CD4-positive, alpha-beta memory T cell (primary cell): ENCODE measurements at regions of chr19 and their contacts with region 1.

Region 1: DNA sequence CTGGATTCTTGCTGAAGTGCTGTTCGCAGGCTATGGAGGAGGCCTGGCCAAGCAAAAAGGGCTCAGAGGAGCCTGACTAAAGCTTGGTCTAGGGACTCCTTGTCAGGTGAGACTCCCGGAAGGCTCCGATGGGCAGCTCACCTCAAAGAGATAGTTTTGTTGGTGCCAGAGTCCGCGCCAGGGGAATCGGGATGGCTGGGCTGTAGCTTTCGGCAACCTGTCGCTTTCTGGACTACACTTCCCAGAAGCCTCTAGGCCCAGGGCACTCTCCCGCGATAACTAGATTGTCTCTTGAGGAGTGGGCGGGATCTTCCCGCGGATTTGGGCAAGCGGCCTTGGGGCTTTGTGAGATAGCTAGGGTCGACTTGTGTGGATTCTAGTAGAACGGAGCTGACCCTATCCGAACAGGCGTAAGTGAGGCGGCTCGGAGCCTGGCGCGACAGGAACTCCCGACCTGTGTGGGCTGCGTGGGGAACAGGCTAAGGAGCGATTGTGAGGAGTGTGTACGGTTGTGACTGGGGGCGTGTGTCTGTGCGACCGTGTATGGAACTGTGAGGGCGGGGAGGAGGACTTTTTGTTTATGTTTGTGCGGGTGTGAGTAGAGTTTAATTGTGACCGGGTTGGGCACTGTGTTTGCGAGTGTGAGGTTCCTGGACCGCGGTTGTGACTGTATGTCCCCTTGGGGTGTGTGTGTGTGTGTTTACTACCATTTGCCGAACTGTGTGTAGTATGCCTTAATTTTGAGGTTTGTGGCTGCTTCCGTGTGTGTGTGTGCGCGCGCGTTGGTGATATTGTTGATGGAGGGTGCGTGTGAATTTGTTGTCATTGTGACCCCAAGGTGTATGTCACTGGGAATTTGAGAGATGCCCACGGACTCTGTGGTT is at the start of gene ZNF345:
- DNase-seq: peak; percentile 87 to 94 (median 89)
- H3K4me3 ChIP-seq: peak within 1 kb of the TSS; percentile 88 to 97
- H3K4me3 Mint-ChIP-seq: no peak within 1 kb of the TSS
- H3K27ac ChIP-seq: peak within 1 kb of the TSS; percentile 86
- H3K27ac Mint-ChIP-seq: no peak within 1 kb of the TSS
- H3K4me1 ChIP-seq: peaks cover 29% of the 10 kb centered on the region
- H3K4me1 Mint-ChIP-seq: peaks cover 5 to 24% (median 11%) of the 10 kb centered on the region in 4 donors
- H3K27me3 ChIP-seq: no peaks in the 10 kb centered on the region
- H3K27me3 Mint-ChIP-seq: no peaks in the 10 kb centered on the region
- total RNA-seq, gene ZNF345: 17.6 to 18.0 TPM

Region 2: GRCh38 chr19:36605101-36605876 is 245.5 kb before region 1 on chr19 and contains the start of gene ZNF382:
- CTCF ChIA-PET with region 1: no interaction called
- POLR2A ChIA-PET with region 1: interaction called, 16 read pairs
- intact Hi-C with region 1: no loop called
- DNase-seq: peak; percentile 85 to 89 (median 86)
- H3K4me3 ChIP-seq: peak within 1 kb of the TSS; percentile 32 to 85
- H3K4me3 Mint-ChIP-seq: peak within 1 kb of the TSS; percentile 90 to 99 (median 96)
- H3K27ac ChIP-seq: peak within 1 kb of the TSS; percentile 91
- H3K27ac Mint-ChIP-seq: peak within 1 kb of the TSS; percentile 82 to 98 (median 92)
- H3K4me1 ChIP-seq: peaks cover 16% of the 10 kb centered on the region
- H3K4me1 Mint-ChIP-seq: peaks cover 17 to 33% (median 23%) of the 10 kb centered on the region in 4 donors
- H3K27me3 ChIP-seq: no peaks in the 10 kb centered on the region
- H3K27me3 Mint-ChIP-seq: peaks cover 0 to 1% of the 10 kb centered on the region in 2 donors
- total RNA-seq, gene ZNF382: 21.1 to 21.9 TPM

Region 3: DNA sequence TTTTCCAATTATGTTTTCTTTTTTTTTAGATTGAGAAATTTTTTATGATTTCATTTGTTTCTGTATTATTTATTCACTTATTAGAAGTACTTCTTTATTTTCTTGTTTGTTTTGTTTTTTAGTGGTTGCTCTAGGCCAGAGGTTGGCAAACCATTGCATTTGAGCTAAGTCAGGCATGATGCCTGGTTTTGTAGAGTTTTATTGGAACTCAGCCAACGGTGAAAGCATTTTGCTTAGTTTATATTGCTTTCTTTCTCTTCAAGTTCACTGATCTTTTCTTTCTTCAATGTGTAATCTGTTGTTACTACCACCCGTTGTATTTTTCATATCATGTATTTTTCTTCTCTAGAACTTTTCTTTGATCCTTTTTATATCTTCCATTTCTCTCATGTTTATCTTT is 143.7 kb before region 1 on chr19:
- CTCF ChIA-PET with region 1: no interaction called
- POLR2A ChIA-PET with region 1: no interaction called
- intact Hi-C with region 1: no loop called
- DNase-seq: no peak
- H3K4me3 ChIP-seq: no peak overlapping the region
- H3K4me3 Mint-ChIP-seq: peak overlapping the region in 1 of 8 donors; percentile 17
- H3K27ac ChIP-seq: no peak overlapping the region
- H3K27ac Mint-ChIP-seq: no peak overlapping the region
- H3K4me1 ChIP-seq: no peaks in the 10 kb centered on the region
- H3K4me1 Mint-ChIP-seq: peaks cover 0 to 3% (median 1%) of the 10 kb centered on the region in 4 donors
- H3K27me3 ChIP-seq: no peaks in the 10 kb centered on the region
- H3K27me3 Mint-ChIP-seq: no peaks in the 10 kb centered on the region

Region 4: DNA sequence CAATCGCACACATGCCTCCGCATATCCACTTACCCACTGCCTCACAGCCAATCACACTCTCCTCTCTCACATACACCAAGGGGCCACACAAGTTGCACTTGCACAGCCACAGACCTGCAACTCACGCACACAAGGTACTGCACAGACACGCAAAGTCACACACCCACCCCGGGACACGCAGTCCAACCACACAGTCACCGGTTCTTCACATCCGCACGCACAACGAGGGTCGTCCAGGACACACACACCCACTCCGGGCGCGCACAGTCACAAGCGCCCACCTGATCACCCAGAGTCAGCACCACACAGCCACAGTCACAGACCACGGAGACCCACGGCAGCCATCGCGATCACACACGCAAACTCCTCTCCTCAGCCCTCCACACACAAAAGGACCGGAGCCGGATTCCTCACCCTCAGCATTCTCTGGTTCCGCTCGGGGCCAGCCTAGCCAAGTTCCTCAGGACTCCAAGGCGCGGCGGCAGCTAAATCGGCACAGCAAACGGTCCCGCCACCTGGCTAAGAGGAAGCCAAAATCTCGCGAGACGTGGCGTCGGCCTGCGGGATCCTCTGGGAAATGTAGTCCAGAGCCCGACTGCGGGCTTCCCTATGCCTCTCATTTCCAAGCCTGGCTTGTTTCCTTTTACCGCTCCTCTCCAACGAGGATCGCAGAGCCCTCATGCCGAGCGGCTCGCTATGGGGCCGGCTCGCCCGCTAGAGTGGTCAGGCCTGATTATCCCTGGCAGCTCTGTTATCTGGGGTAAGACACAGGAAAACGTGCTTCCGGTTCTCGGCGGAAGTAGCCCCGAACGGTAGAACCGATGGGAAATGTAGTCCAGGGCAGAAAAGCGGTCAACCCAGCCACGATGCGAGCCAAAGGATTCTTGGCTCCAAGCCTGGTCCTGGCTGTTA is 78.2 kb before region 1 on chr19 and contains the start of gene ZNF850:
- CTCF ChIA-PET with region 1: no interaction called
- POLR2A ChIA-PET with region 1: interaction called, 16 read pairs
- intact Hi-C with region 1: loop called (anchors 1 kb)
- DNase-seq: peak; percentile 94 to 98 (median 95)
- H3K4me3 ChIP-seq: peak within 1 kb of the TSS; percentile 85 to 90
- H3K4me3 Mint-ChIP-seq: peak within 1 kb of the TSS; percentile 94 to 100 (median 98)
- H3K27ac ChIP-seq: peak within 1 kb of the TSS; percentile 81
- H3K27ac Mint-ChIP-seq: peak within 1 kb of the TSS; percentile 91 to 97 (median 95)
- H3K4me1 ChIP-seq: peaks cover 19% of the 10 kb centered on the region
- H3K4me1 Mint-ChIP-seq: peaks cover 18 to 27% (median 24%) of the 10 kb centered on the region in 4 donors
- H3K27me3 ChIP-seq: no peaks in the 10 kb centered on the region
- H3K27me3 Mint-ChIP-seq: peaks cover 0 to 2% of the 10 kb centered on the region in 2 donors
- total RNA-seq, gene ZNF850: 3.7 to 5.4 TPM

Region 5: GRCh38 chr19:36915992-36916830 is 65.4 kb after region 1 on chr19 and contains the starts of genes ZNF568 and ZNF829:
- CTCF ChIA-PET with region 1: no interaction called
- POLR2A ChIA-PET with region 1: interaction called, 15 read pairs
- intact Hi-C with region 1: loop called (anchors 1 kb)
- DNase-seq: peak; percentile 92 to 98 (median 95)
- H3K4me3 ChIP-seq: peak within 1 kb of the TSS; percentile 60 to 88
- H3K4me3 Mint-ChIP-seq: peak within 1 kb of the TSS; percentile 84 to 97 (median 94)
- H3K27ac ChIP-seq: peak within 1 kb of the TSS; percentile 93
- H3K27ac Mint-ChIP-seq: peak within 1 kb of the TSS; percentile 81 to 97 (median 96)
- H3K4me1 ChIP-seq: peaks cover 14% of the 10 kb centered on the region
- H3K4me1 Mint-ChIP-seq: peaks cover 19 to 39% (median 28%) of the 10 kb centered on the region in 4 donors
- H3K27me3 ChIP-seq: no peaks in the 10 kb centered on the region
- H3K27me3 Mint-ChIP-seq: no peaks in the 10 kb centered on the region
- total RNA-seq, gene ZNF568: 18.8 to 20.3 TPM
- total RNA-seq, gene ZNF829: 8.5 to 9.8 TPM

Region 6: GRCh38 chr19:37172368-37173366 is 321.9 kb after region 1 on chr19 and contains the start of gene ZNF585A:
- CTCF ChIA-PET with region 1: no interaction called
- POLR2A ChIA-PET with region 1: no interaction called
- intact Hi-C with region 1: loop called (anchors 1 kb)
- DNase-seq: peak; percentile 90 to 94 (median 92)
- H3K4me3 ChIP-seq: peak within 1 kb of the TSS; percentile 81 to 82
- H3K4me3 Mint-ChIP-seq: peak within 1 kb of the TSS in 3 of 8 donors; percentile 12 to 51 (median 26)
- H3K27ac ChIP-seq: peak within 1 kb of the TSS; percentile 61
- H3K27ac Mint-ChIP-seq: no peak within 1 kb of the TSS
- H3K4me1 ChIP-seq: peaks cover 17% of the 10 kb centered on the region
- H3K4me1 Mint-ChIP-seq: peaks cover 0 to 2% (median 0%) of the 10 kb centered on the region in 4 donors
- H3K27me3 ChIP-seq: no peaks in the 10 kb centered on the region
- H3K27me3 Mint-ChIP-seq: no peaks in the 10 kb centered on the region
- total RNA-seq, gene ZNF585A: 16.5 to 25.4 TPM

Region 7: GRCh38 chr19:37466798-37467607 is 616.2 kb after region 1 on chr19 and contains the start of gene ZNF569:
- CTCF ChIA-PET with region 1: no interaction called
- POLR2A ChIA-PET with region 1: interaction called, 9 read pairs
- intact Hi-C with region 1: loop called (anchors 2 kb)
- DNase-seq: peak; percentile 91 to 96 (median 93)
- H3K4me3 ChIP-seq: peak within 1 kb of the TSS; percentile 63 to 83
- H3K4me3 Mint-ChIP-seq: peak within 1 kb of the TSS; percentile 95 to 99 (median 97)
- H3K27ac ChIP-seq: peak within 1 kb of the TSS; percentile 74
- H3K27ac Mint-ChIP-seq: peak within 1 kb of the TSS; percentile 95 to 99 (median 98)
- H3K4me1 ChIP-seq: peaks cover 31% of the 10 kb centered on the region
- H3K4me1 Mint-ChIP-seq: peaks cover 28 to 45% (median 35%) of the 10 kb centered on the region in 4 donors
- H3K27me3 ChIP-seq: no peaks in the 10 kb centered on the region
- H3K27me3 Mint-ChIP-seq: no peaks in the 10 kb centered on the region
- total RNA-seq, gene ZNF569: 13.5 to 14.9 TPM